ENCODE measurements at regions of chr19 and their contacts with region 1.

Region 1: DNA sequence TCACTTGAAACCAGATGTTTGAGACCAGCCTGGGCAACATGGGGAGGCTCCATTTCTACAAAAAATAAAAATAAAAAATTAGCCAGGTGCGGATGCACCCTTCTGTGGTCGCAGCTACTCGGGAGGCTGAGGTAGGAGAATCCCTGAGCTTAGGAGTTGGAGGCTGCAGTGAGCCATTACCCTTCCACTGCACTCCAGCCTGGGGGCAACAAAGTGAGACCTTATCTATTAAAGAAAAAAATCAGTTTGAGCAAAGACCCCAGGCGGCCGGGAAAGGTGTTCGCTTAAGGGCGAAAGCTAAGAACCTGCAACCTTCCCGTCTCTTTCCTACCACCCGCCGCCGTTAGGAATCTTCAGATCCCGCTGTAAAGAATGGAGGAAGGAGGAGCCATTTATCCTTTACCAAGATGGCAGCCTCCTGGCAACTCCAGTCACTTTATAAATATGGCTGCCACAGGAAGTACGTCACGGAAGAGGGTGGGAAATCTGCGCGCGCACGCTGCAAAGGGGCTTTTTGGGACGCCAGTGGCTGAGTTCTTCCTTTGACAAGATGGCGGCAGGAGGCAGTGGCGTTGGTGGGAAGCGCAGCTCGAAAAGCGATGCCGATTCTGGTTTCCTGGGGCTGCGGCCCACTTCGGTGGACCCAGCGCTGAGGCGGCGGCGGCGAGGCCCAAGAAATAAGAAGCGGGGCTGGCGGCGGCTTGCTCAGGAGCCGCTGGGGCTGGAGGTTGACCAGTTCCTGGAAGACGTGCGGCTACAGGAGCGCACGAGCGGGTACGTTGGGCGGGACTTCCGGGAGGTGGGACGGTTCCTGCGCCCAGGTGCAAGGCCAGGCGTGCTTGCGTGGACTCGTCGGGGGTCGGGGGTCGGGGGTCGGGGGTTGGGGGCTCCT is at the start of gene NOP53:
- DNase-seq: peak; percentile 95
- H3K4me3 Mint-ChIP-seq: peak within 1 kb of the TSS; percentile 99
- H3K27ac Mint-ChIP-seq: peak within 1 kb of the TSS; percentile 98
- H3K4me1 Mint-ChIP-seq: peaks cover 26% of the 10 kb centered on the region
- H3K27me3 Mint-ChIP-seq: no peaks in the 10 kb centered on the region
- total RNA-seq, gene NOP53: 266 and 269 TPM in 2 replicates

Region 2: DNA sequence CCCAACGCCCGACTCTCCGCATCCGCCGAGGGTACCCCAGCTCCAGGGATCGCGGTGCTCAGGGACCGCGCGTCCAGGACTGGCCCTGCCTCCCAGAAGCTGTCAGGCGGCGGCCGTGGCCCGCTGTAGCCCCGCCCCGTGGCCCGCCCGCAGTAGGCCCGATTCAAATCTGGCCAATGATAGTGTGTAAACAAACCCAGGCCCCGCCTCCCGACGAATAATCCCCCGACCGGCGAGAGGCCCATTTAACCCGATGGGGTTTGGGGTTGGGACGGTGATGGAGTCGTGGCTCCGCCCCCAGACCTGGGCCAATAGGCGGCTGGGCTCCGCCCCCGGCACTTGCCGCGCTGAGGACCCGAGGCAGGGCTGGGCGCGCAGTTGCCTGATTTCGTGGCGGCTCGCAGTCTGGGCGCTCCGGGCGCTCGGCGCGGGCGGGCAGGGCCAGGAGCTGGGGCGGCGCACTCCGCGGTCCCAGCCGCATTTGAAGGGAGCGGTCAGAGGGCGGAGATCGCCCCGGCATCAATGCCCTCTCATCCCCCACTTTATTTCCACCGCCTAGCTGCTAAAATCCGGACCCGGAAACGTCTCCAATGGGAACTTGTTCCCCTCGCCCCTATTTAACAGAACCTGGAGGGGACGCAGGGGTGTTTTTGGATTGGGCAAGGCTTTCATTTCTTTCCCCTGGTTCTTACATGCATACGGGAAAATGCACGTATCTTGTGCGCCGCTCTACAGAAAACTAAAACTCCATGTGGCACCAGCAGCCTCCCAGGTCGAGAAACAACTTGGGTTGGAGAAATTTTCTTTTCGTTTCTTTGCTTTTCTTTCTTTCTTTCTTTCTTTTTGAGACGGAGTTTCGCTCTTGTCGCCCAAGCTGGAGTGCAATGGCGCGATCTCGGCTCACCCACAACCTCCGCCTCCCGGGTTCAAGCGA is 144.7 kb before region 1 on chr19:
- intact Hi-C with region 1: loop called (anchors 10 kb)
- DNase-seq: peak; percentile 98
- H3K4me3 Mint-ChIP-seq: peak overlapping the region; percentile 94
- H3K27ac Mint-ChIP-seq: peak overlapping the region; percentile 77
- H3K4me1 Mint-ChIP-seq: peaks cover 24% of the 10 kb centered on the region
- H3K27me3 Mint-ChIP-seq: peaks cover 2% of the 10 kb centered on the region

Region 3: DNA sequence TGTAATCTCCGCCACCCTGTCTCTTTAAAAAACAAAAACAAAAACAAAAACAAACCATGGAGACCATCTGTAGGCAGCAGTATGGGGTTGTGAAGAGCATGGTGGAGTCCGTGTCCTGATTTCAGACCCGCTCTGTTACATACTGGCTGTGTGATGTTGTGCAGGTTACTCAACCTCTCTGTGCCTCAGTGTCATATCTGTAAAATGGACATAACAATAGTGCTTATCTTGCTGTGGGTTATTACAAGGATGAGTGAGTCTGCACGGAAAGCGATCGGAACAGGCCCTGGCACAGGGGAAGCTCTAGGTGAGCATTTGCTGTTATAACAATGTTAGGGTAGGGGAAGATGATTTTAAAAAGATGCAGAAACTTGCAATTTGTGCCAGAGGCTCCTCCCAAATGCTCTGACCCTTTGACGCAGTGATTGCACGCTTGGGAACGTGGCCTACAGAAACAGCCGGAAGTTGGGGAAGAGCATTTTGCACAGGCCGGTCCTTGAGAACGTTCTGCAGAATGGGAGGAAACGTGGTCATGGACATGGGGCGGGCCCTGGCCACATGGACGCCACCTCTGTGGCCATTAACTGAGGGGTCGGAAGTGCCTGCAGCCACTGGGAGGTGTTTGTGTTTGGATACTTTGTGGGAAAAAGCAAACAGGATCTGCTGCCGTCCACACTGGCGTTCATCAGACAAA is 17.5 kb after region 1 on chr19:
- intact Hi-C with region 1: no loop called
- DNase-seq: no peak
- H3K4me3 Mint-ChIP-seq: no peak overlapping the region
- H3K27ac Mint-ChIP-seq: no peak overlapping the region
- H3K4me1 Mint-ChIP-seq: peaks cover 1% of the 10 kb centered on the region
- H3K27me3 Mint-ChIP-seq: no peaks in the 10 kb centered on the region

Measured in activated T-helper 2 cell treated with anti-CD3 and anti-CD28 coated beads, Interferon-gamma antibody, Interleukin-2, Interleukin-4, amounts not matched to agents 10 μg/mL and 5 μg/mL and 100 μg/mL, durations not matched to agents 14 hours and 24 hours and 36 hours (primary cell).